Natural killer cell (primary cell): ENCODE measurements at regions of chr18 and their contacts with region 1.

Region 1: GRCh38 chr18:1034971-1035370 is 130.3 kb downstream of the ADCYAP1 start:
- DNase-seq: no peak
- ATAC-seq: no peak
- H3K4me3 ChIP-seq: no peak overlapping the region
- H3K4me3 Mint-ChIP-seq: no peak overlapping the region
- H3K27ac ChIP-seq: no peak overlapping the region
- H3K27ac Mint-ChIP-seq: no peak overlapping the region
- H3K4me1 ChIP-seq: no peaks in the 10 kb centered on the region
- H3K4me1 Mint-ChIP-seq: no peaks in the 10 kb centered on the region
- H3K27me3 ChIP-seq: no peaks in the 10 kb centered on the region
- H3K27me3 Mint-ChIP-seq: no peaks in the 10 kb centered on the region
- CTCF ChIP-seq: no peak

Region 2: DNA sequence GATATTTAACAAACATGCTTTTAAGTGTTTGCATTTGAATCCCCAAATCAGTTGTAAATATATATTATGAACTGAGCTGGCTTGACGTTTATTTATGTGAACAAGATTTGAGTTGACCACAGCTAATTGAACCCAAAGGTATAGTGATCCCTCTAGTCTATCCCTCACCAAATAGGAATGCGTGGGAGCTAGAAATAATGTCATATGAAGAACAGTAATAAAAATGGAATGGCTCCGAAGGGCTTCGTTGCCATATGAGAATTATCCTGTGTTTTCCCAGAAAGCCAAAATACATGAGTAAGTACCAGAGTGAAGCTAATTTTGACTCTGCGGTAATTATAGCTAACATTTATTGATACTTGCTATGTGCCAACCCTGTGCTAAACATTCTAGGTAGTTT is 12.4 kb after region 1 on chr18:
- intact Hi-C with region 1: loop called (anchors 1 kb)
- DNase-seq: no peak
- ATAC-seq: no peak
- H3K4me3 ChIP-seq: no peak overlapping the region
- H3K4me3 Mint-ChIP-seq: no peak overlapping the region
- H3K27ac ChIP-seq: no peak overlapping the region
- H3K27ac Mint-ChIP-seq: no peak overlapping the region
- H3K4me1 ChIP-seq: no peaks in the 10 kb centered on the region
- H3K4me1 Mint-ChIP-seq: no peaks in the 10 kb centered on the region
- H3K27me3 ChIP-seq: no peaks in the 10 kb centered on the region
- H3K27me3 Mint-ChIP-seq: no peaks in the 10 kb centered on the region
- CTCF ChIP-seq: no peak